A549 (cell line): ENCODE measurements at regions of chr19 and their contacts with region 1.

Region 1: GRCh38 chr19:10936661-10937084 is 8.1 kb downstream of the TIMM29 start:
- DNase-seq: peak; percentile 56 to 75
- ATAC-seq: peak; percentile 84; a peak in 5 of 6 replicates
- H3K4me3 ChIP-seq: no peak overlapping the region
- H3K27ac ChIP-seq: peak overlapping the region in 1 of 2 experiments; percentile 72; a peak in 3 of 6 replicates
- H3K4me1 ChIP-seq: peaks cover 24% of the 10 kb centered on the region
- CTCF ChIP-seq: peak; percentile 55
- EP300 ChIP-seq: no peak
- POLR2A ChIP-seq: no peak
- RAD21 ChIP-seq: peak; percentile 62 to 72

Region 2: GRCh38 chr19:10952809-10953208 is 16.1 kb after region 1 on chr19:
- CTCF ChIA-PET with region 1: interaction called, 25 read pairs
- POLR2A ChIA-PET with region 1: interaction called, 3 read pairs
- DNase-seq: no peak
- ATAC-seq: no peak
- H3K4me3 ChIP-seq: no peak overlapping the region
- H3K27ac ChIP-seq: peak overlapping the region in 1 of 2 experiments; percentile 57; a peak in 2 of 6 replicates
- H3K4me1 ChIP-seq: peaks cover 14% of the 10 kb centered on the region
- CTCF ChIP-seq: no peak
- EP300 ChIP-seq: no peak
- POLR2A ChIP-seq: no peak
- RAD21 ChIP-seq: no peak

Region 3: GRCh38 chr19:10960314-10961072 is 23.8 kb after region 1 on chr19 and contains the start of gene SMARCA4:
- CTCF ChIA-PET with region 1: interaction called, 11 read pairs
- POLR2A ChIA-PET with region 1: interaction called, 6 read pairs
- DNase-seq: peak; percentile 86 to 95
- ATAC-seq: peak; percentile 89
- H3K4me3 ChIP-seq: peak within 1 kb of the TSS; percentile 94
- H3K27ac ChIP-seq: peak within 1 kb of the TSS; percentile 99
- H3K4me1 ChIP-seq: peaks cover 10% of the 10 kb centered on the region; the same call in 1 of the 3 replicates
- CTCF ChIP-seq: no peak
- EP300 ChIP-seq: no peak
- POLR2A ChIP-seq: peak; percentile 87
- RAD21 ChIP-seq: no peak
- polyA plus RNA-seq, gene SMARCA4: 8.1 and 10.8 TPM in 2 replicates

Region 4: GRCh38 chr19:11011668-11012067 is 75.0 kb after region 1 on chr19:
- CTCF ChIA-PET with region 1: interaction called, 14 read pairs
- POLR2A ChIA-PET with region 1: no interaction called
- DNase-seq: no peak
- ATAC-seq: peak in 1 of 2 experiments; percentile 27; a peak in 1 of 6 replicates
- H3K4me3 ChIP-seq: no peak overlapping the region
- H3K27ac ChIP-seq: no peak overlapping the region
- H3K4me1 ChIP-seq: no peaks in the 10 kb centered on the region
- CTCF ChIP-seq: no peak
- EP300 ChIP-seq: no peak
- POLR2A ChIP-seq: no peak
- RAD21 ChIP-seq: no peak

Region 5: DNA sequence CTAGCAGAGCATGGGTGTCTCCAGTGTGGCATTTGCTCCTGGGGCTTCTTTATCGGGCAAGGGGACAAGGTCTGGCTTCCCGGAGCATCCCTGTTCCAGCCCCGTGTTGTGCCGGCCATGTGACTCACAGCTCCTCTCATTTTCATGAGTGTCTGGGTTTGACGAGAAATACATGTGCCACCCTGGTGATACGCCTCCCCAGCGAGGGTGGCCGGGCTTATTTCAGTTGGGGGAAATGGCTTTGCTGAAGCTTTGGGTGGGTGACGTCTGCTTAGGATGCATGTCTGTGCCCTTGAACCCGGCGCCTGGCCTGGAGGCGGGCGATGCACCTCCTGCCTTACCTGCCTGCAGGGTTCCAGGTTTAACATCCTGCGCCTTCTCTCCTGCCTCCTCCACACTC is 90.7 kb after region 1 on chr19:
- CTCF ChIA-PET with region 1: interaction called, 10 read pairs
- POLR2A ChIA-PET with region 1: no interaction called
- DNase-seq: no peak
- ATAC-seq: no peak
- H3K4me3 ChIP-seq: no peak overlapping the region
- H3K27ac ChIP-seq: no peak overlapping the region
- H3K4me1 ChIP-seq: no peaks in the 10 kb centered on the region
- CTCF ChIP-seq: no peak
- EP300 ChIP-seq: no peak
- POLR2A ChIP-seq: no peak
- RAD21 ChIP-seq: no peak

Region 6: GRCh38 chr19:11035441-11036377 is 99.0 kb after region 1 on chr19:
- CTCF ChIA-PET with region 1: interaction called, 19 read pairs
- POLR2A ChIA-PET with region 1: no interaction called
- DNase-seq: peak; percentile 84 to 86
- ATAC-seq: peak; percentile 93 to 98
- H3K4me3 ChIP-seq: no peak overlapping the region
- H3K27ac ChIP-seq: 0 out of 6 replicates have a peak overlapping the region, but pooled peaks of 1 of the 2 experiments have one; percentile 5
- H3K4me1 ChIP-seq: 0 out of 3 replicates have a peak, but pooled peaks cover 4% of the 10 kb centered on the region
- CTCF ChIP-seq: peak; percentile 74
- EP300 ChIP-seq: no peak
- POLR2A ChIP-seq: no peak
- RAD21 ChIP-seq: peak; percentile 72 to 81